Vagina (tissue), 2 donors: ENCODE measurements at regions of chr21 and their contacts with region 1.

Region 1: GRCh38 chr21:17925000-17925610 is 105.9 kb upstream of the C21orf91 start:
- DNase-seq: no peak
- H3K4me3 ChIP-seq: no peak overlapping the region
- H3K27ac ChIP-seq: no peak overlapping the region
- H3K4me1 ChIP-seq: no peaks in the 10 kb centered on the region
- H3K27me3 ChIP-seq: no peaks in the 10 kb centered on the region
- CTCF ChIP-seq: peak; percentile 51 to 78 (median 66)
- POLR2A ChIP-seq: no peak

Region 2: GRCh38 chr21:17688912-17689874 is 235.9 kb before region 1 on chr21:
- intact Hi-C with region 1: loop called (anchors 10 kb)
- DNase-seq: no peak
- H3K4me3 ChIP-seq: no peak overlapping the region
- H3K27ac ChIP-seq: peak overlapping the region; percentile 48
- H3K4me1 ChIP-seq: peaks cover 21% of the 10 kb centered on the region
- H3K27me3 ChIP-seq: no peaks in the 10 kb centered on the region
- CTCF ChIP-seq: no peak
- POLR2A ChIP-seq: no peak

Region 3: GRCh38 chr21:18041012-18041411 is 115.9 kb after region 1 on chr21:
- intact Hi-C with region 1: no loop called
- DNase-seq: no peak
- H3K4me3 ChIP-seq: no peak overlapping the region
- H3K27ac ChIP-seq: no peak overlapping the region
- H3K4me1 ChIP-seq: no peaks in the 10 kb centered on the region
- H3K27me3 ChIP-seq: no peaks in the 10 kb centered on the region
- CTCF ChIP-seq: peak in 1 of 3 experiments; percentile 7
- POLR2A ChIP-seq: no peak